Vagina (tissue), 2 donors: ENCODE measurements at regions of chr5 and their contacts with region 1.

Region 1: GRCh38 chr5:109161914-109162683 is 247.7 kb downstream of the PJA2 start:
- DNase-seq: no peak
- H3K4me3 ChIP-seq: no peak overlapping the region
- H3K27ac ChIP-seq: no peak overlapping the region
- H3K4me1 ChIP-seq: no peaks in the 10 kb centered on the region
- H3K27me3 ChIP-seq: no peaks in the 10 kb centered on the region
- CTCF ChIP-seq: no peak
- POLR2A ChIP-seq: no peak

Region 2: GRCh38 chr5:107557051-107557658 is 1604.9 kb before region 1 on chr5:
- intact Hi-C with region 1: loop called (anchors 10 kb)
- DNase-seq: no peak
- H3K4me3 ChIP-seq: no peak overlapping the region
- H3K27ac ChIP-seq: no peak overlapping the region
- H3K4me1 ChIP-seq: peaks cover 10% of the 10 kb centered on the region
- H3K27me3 ChIP-seq: no peaks in the 10 kb centered on the region
- CTCF ChIP-seq: no peak
- POLR2A ChIP-seq: no peak